Testis (tissue), 5 donors: ENCODE measurements at regions of chr2 and their contacts with region 1.

Region 1: DNA sequence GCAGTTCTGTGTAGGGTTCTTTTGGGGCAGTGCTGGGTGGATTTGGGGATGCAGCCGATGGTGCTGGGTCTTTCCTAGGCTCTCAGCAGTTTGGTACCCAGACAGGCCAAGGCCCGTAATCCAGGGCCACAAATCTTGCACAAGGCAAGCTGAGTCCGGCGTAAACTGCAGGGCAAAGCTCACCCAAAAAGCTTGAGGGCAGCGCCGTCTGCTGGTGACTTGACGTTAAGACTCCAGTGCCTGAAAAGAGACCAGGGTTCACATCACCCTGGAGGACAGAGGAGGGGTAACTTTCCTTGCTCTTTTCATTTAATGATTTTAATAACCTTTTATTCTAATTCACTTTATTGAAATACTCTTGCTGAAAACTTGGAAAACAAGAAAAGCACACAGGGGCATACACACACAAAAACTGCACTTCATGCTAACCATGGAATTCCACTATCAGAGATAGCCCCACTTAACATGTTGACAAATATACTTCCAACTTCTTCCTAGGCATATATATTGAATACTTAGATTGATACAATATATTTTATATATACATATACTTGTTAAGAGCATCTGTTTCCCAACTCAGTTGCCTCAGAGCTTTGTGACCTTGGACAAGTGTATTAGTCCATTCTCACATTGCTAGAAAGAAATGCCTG is 38.9 kb downstream of the CNGA3 start:
- DNase-seq: peak; percentile 87
- H3K4me3 ChIP-seq: no peak overlapping the region
- H3K27ac ChIP-seq: no peak overlapping the region
- H3K4me1 ChIP-seq: no peaks in the 10 kb centered on the region
- H3K27me3 ChIP-seq: no peaks in the 10 kb centered on the region
- CTCF ChIP-seq: peak; percentile 90 to 97 (median 93)
- POLR2A ChIP-seq: no peak

Region 2: DNA sequence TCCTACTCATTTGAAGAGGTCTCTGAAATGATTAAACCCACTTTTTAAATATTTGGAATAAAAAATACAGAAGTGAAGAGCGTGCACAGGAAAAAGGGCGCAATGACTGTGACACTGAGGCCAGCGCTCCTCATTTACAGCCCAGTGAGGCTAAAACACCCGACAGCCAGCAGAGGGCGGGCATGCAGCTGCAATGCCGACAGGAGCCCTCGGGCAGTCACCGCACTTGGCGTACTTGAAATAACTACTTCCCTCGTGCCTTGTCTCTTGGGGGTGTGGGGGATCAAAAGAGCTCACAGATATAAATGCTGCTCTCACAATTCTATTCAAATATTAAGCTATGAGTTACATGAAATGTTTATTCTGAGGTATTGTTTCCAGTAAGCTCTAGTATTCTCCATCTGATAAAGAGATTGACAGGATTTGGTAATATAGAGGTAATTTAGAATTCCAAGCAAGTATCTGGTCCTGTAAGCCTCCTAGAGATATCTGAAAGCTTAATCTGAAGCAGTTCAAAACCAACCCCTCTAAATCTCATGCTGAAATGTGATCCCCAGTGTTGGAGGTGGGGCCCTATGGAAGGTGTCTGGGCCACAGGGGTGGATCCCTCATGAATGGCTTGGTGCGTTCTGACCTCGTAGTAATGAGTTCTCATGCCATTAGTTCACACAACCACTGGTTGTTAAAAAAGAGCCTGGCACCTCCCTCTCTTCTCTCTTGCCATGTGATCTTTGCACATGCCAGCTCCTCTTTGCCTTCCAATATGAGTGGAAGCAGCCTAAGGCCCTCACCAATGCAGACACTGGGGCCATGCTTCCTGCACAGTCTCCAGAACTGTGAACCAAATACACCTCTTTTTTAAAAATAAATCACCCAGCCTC is 578.2 kb before region 1 on chr2:
- intact Hi-C with region 1: loop called (anchors 10 kb)
- DNase-seq: peak; percentile 90
- H3K4me3 ChIP-seq: no peak overlapping the region
- H3K27ac ChIP-seq: no peak overlapping the region
- H3K4me1 ChIP-seq: no peaks in the 10 kb centered on the region
- H3K27me3 ChIP-seq: no peaks in the 10 kb centered on the region
- CTCF ChIP-seq: peak; percentile 77 to 81 (median 79)
- POLR2A ChIP-seq: no peak